Adrenal gland (tissue), 19 donors: ENCODE measurements at regions of chr14 and their contacts with region 1.

Region 1: GRCh38 chr14:90903101-90903500 is 86.9 kb upstream of the TTC7B start:
- DNase-seq: peak; percentile 51 to 85 (median 56)
- H3K4me3 ChIP-seq: no peak overlapping the region
- H3K27ac ChIP-seq: no peak overlapping the region
- H3K4me1 ChIP-seq: no peaks in the 10 kb centered on the region
- H3K27me3 ChIP-seq: no peaks in the 10 kb centered on the region
- CTCF ChIP-seq: peak; percentile 56 to 83 (median 77)
- POLR2A ChIP-seq: no peak

Region 2: GRCh38 chr14:90850487-90850886 is 52.6 kb before region 1 on chr14:
- intact Hi-C with region 1: no loop called
- DNase-seq: no peak
- H3K4me3 ChIP-seq: no peak overlapping the region
- H3K27ac ChIP-seq: no peak overlapping the region
- H3K4me1 ChIP-seq: no peaks in the 10 kb centered on the region
- H3K27me3 ChIP-seq: no peaks in the 10 kb centered on the region
- CTCF ChIP-seq: no peak
- POLR2A ChIP-seq: no peak

Region 3: DNA sequence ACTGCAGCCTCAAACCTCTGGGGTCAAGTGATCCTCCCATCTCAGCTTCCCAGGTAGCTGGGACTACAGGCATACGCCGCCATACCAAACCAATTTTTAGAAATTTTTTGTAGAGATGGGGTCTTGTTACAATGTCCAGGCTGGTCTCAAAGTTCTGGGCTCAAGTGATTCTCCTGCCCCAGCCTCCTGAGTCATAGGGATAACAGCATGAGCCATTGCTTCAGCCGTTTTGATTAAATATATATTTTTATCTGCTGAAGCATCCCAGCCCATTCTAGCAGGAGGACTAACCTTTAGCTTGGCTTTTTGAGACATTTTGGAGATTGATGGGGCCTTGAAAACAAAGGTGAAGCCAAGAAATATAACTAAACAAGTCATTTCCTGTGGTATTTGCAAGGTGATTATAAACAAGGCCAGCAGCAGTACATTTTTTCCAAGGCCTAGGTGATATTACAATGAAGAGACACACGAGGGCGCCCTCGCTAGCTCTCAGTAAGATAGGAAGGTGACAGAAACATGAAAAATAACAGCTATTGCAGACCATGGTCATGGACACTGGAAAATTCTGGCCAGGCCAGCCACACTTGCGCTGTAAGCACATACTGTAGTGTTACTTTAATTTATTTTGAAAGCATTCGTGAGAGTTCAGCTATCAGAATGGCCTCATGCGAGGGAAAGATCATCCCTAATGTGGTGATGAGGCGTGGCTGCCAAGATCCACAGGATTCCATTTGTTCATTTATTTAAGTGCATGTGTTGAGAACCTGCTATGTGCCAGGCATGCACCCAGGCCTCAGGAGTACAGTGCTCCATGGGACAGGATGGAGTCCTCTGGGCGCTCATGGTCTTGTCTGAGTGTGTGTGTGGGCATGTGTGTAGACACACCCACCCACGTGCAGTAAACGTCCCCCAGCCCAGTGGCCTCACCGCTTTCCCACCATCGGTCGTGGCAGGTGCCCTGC is 274.3 kb after region 1 on chr14:
- intact Hi-C with region 1: loop called (anchors 2 to 5 kb)
- DNase-seq: peak; percentile 39 to 85 (median 64)
- H3K4me3 ChIP-seq: no peak overlapping the region
- H3K27ac ChIP-seq: no peak overlapping the region
- H3K4me1 ChIP-seq: no peaks in the 10 kb centered on the region
- H3K27me3 ChIP-seq: no peaks in the 10 kb centered on the region
- CTCF ChIP-seq: peak; percentile 61 to 83 (median 76)
- POLR2A ChIP-seq: no peak

Region 4: GRCh38 chr14:91286530-91286937 is 383.4 kb after region 1 on chr14:
- intact Hi-C with region 1: loop called (anchors 5 kb)
- DNase-seq: peak; percentile 69 to 95 (median 79)
- H3K4me3 ChIP-seq: no peak overlapping the region
- H3K27ac ChIP-seq: no peak overlapping the region
- H3K4me1 ChIP-seq: no peaks in the 10 kb centered on the region
- H3K27me3 ChIP-seq: no peaks in the 10 kb centered on the region
- CTCF ChIP-seq: peak; percentile 86 to 94 (median 92)
- POLR2A ChIP-seq: no peak

Region 5: DNA sequence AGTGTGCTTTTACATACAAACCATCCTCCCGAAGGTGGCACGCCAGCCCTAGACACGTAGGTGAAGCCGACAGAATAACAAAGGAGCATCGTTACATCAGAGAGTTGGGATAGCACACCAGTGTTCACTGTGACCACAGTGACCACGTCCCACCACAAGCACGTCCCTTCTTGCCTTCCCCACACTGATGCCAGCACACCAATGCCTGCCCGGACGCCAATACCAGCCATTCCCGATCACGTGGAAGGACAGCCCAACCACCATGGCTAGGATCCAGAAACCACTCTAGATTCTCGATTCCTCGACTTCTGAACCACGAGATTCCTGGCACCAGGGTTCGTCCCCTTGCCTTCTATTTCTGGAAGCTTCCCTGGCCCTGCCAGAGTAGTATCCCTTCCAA is 389.4 kb after region 1 on chr14:
- intact Hi-C with region 1: loop called in 1 of 2 experiments (anchors 5 kb)
- DNase-seq: no peak
- H3K4me3 ChIP-seq: no peak overlapping the region
- H3K27ac ChIP-seq: no peak overlapping the region
- H3K4me1 ChIP-seq: no peaks in the 10 kb centered on the region
- H3K27me3 ChIP-seq: no peaks in the 10 kb centered on the region
- CTCF ChIP-seq: no peak
- POLR2A ChIP-seq: no peak